Calu3 (cell line): ENCODE measurements at regions of chr19 and their contacts with region 1.

Region 1: DNA sequence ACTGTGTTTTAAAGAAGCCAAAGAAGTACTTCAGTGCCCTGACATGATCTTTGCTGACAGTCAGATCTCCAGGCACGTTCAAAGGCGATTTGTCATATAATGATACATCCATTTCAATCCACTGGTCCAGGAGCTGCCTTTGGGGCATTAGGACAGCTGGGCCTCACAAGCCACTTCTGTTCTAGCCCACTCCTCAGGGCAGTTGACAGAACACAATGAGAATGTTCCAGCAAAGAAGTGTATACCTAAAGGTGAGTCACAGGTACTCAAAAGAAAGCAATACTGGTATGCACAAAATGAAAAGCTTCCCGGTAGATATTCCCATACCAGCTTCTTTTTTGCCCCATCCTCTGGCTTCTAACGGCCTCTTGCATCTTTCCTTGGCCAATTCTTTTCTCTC is 12.5 kb upstream of the MAP3K10 start:
- DNase-seq: no peak
- H3K4me3 Mint-ChIP-seq: no peak overlapping the region
- H3K27ac Mint-ChIP-seq: no peak overlapping the region
- H3K4me1 Mint-ChIP-seq: no peaks in the 10 kb centered on the region
- H3K27me3 Mint-ChIP-seq: peaks cover 14% of the 10 kb centered on the region
- CTCF ChIP-seq: no peak

Region 2: DNA sequence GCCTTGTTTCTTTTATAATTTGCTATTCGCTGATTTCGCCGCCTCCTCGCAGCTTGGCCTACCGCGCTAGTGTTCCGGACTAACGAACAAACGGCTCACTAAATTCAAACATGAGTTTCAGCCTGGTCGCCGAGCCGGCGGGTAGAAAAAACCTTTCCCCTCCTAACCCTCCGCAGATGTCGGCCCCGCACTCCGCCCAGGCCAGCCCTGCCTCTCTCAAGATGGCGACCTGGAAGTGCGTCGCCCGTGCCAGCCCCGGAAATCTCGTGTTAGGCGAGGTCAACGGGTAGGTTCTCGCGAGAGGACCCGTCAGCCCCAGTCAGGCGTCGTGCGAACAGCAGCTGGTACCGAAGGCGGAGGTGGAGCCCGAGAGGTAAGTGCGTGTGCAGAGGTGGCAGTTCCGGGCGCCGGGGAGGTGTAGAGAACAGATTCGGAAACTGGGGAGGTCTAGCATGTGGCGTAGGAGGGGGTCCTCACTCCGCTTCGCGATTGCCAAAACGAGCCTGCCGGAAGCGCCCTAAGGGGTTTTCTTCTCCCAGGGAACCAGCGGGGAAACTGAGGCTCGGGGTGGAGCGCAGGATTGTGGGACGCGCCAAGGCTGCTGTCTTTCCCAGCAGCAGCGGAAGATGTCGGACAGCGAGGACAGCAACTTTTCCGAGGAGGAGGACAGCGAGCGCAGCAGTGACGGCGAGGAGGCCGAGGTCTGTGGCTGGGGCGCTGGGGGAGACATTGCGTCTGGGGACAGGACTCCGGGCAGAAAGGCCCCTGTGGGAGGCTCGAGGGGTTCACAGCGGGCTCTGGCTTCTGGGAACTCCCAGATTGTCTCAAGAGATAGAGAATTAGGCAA is 733.3 kb before region 1 on chr19 and contains the start of gene SUPT5H:
- CTCF ChIA-PET with region 1: interaction called, 10 read pairs
- intact Hi-C with region 1: no loop called
- DNase-seq: peak; percentile 98
- H3K4me3 Mint-ChIP-seq: peak within 1 kb of the TSS; percentile 96
- H3K27ac Mint-ChIP-seq: peak within 1 kb of the TSS; percentile 99
- H3K4me1 Mint-ChIP-seq: peaks cover 16% of the 10 kb centered on the region
- H3K27me3 Mint-ChIP-seq: no peaks in the 10 kb centered on the region
- CTCF ChIP-seq: no peak
- total RNA-seq, gene SUPT5H: 158 and 189 TPM in 2 replicates

Region 3: DNA sequence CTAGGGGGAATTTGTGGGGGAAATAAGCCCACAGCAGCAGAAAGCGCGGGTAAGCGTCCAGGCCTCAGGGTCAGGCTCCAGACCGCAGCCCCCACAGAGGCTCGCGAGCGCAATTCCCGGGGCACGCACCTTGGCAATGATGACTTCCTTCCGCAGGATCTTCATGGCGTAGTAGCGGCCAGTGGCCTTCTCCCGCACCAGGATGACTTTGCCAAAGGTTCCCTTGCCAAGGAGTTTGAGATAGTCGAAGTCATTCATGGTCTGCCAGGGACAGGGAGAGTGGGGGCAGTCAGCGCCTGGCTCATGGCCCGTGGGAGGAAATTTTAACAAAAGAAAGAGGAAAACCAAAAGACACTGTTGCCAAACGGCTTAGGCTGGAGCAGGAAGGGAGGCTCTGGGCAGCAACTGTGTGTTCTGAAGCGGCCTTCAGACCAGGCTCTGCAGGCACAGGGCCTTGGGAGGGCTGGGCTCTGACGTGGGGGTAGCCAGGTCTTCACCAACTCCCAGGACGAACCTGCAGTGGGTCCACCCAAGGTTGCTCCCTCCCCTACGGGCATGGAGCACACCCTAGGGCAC is 63.1 kb after region 1 on chr19:
- CTCF ChIA-PET with region 1: no interaction called
- intact Hi-C with region 1: no loop called
- DNase-seq: no peak
- H3K4me3 Mint-ChIP-seq: no peak overlapping the region
- H3K27ac Mint-ChIP-seq: no peak overlapping the region
- H3K4me1 Mint-ChIP-seq: no peaks in the 10 kb centered on the region
- H3K27me3 Mint-ChIP-seq: no peaks in the 10 kb centered on the region
- CTCF ChIP-seq: no peak